ENCODE measurements at regions of chr9 and their contacts with region 1.

Region 1: DNA sequence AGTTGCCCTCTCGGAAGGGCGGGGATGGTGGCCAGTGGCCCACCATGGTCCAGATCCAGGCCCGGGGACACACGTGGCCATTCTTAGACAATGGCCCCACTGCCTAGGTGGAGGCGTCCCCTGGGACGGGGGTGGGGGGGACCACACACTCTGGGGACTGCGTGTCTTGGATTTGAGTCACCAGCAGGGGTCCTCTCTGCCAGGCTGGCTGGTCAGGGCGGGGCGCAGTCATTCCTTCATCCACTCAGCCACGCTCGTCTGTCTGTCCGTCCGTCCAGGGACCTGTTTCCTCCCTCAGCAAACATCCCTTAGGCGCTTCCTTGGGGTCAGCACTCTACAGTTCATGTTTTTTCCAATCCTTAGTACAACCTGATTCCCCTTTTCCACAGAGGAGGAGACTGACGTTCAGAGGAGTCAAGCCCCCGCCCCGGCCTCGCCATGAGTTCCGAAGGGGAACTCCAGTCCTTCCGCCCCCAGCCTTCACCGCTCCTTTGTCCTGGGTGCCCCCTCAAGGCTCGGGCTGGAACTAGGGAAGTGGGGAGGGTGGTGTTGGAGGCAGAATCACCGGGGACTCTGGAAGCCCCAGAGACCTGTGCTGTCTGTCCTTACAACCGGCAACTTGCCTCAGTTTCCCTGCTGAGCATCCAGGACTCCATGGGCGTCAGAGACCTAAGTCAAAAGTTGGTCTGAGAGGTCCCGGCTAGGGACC is 276.6 kb upstream of the MVB12B start:
- DNase-seq: peak; percentile 33 to 58
- ATAC-seq: no peak
- H3K4me3 ChIP-seq: no peak overlapping the region
- H3K27ac ChIP-seq: no peak overlapping the region
- H3K4me1 ChIP-seq: no peaks in the 10 kb centered on the region
- H3K27me3 ChIP-seq: no peaks in the 10 kb centered on the region

Region 2: GRCh38 chr9:125988479-125989050 is 61.5 kb before region 1 on chr9:
- intact Hi-C with region 1: loop called in 1 of 2 experiments (anchors 10 kb)
- DNase-seq: peak in 1 of 2 donors; percentile 68
- ATAC-seq: no peak
- H3K4me3 ChIP-seq: no peak overlapping the region
- H3K27ac ChIP-seq: no peak overlapping the region
- H3K4me1 ChIP-seq: no peaks in the 10 kb centered on the region
- H3K27me3 ChIP-seq: no peaks in the 10 kb centered on the region